ENCODE measurements at regions of chr1 and their contacts with region 1.

Region 1: GRCh38 chr1:59296358-59297256 is at the start of gene FGGY:
- DNase-seq: peak; percentile 97 to 98
- ATAC-seq: peak; percentile 80 to 83
- H3K4me3 ChIP-seq: peak within 1 kb of the TSS; percentile 53 to 82 (median 70)
- H3K27ac ChIP-seq: peak within 1 kb of the TSS; percentile 90 to 99 (median 96)
- H3K4me1 ChIP-seq: peaks cover 17 to 48% of the 10 kb centered on the region in 2 donors
- H3K27me3 ChIP-seq: no peaks in the 10 kb centered on the region
- CTCF ChIP-seq: no peak
- POLR2A ChIP-seq: peak; percentile 84 to 86
- total RNA-seq, gene FGGY: 24.9 to 35.9 (median 30.5) TPM

Region 2: GRCh38 chr1:58903514-58904298 is 392.9 kb before region 1 on chr1:
- in situ Hi-C with region 1: loop called in 3 of 4 experiments (anchors 10 to 25 kb)
- intact Hi-C with region 1: loop called (anchors 2 kb)
- DNase-seq: peak; percentile 86 to 93
- ATAC-seq: peak; percentile 69 to 81
- H3K4me3 ChIP-seq: peak overlapping the region; percentile 53 to 82 (median 60)
- H3K27ac ChIP-seq: peak overlapping the region; percentile 94 to 100 (median 94)
- H3K4me1 ChIP-seq: peaks cover 52 to 54% of the 10 kb centered on the region in 2 donors
- H3K27me3 ChIP-seq: no peaks in the 10 kb centered on the region
- CTCF ChIP-seq: no peak
- POLR2A ChIP-seq: peak; percentile 82 to 91

Region 3: GRCh38 chr1:59107516-59107915 is 189.1 kb before region 1 on chr1:
- in situ Hi-C with region 1: no loop called
- intact Hi-C with region 1: loop called (anchors 10 kb)
- DNase-seq: peak; percentile 87 to 92
- ATAC-seq: peak; percentile 98 to 99
- H3K4me3 ChIP-seq: no peak overlapping the region
- H3K27ac ChIP-seq: peak overlapping the region; percentile 76 to 87 (median 79)
- H3K4me1 ChIP-seq: peaks cover 11 to 17% of the 10 kb centered on the region in 2 donors
- H3K27me3 ChIP-seq: no peaks in the 10 kb centered on the region
- CTCF ChIP-seq: no peak
- POLR2A ChIP-seq: no peak

Region 4: DNA sequence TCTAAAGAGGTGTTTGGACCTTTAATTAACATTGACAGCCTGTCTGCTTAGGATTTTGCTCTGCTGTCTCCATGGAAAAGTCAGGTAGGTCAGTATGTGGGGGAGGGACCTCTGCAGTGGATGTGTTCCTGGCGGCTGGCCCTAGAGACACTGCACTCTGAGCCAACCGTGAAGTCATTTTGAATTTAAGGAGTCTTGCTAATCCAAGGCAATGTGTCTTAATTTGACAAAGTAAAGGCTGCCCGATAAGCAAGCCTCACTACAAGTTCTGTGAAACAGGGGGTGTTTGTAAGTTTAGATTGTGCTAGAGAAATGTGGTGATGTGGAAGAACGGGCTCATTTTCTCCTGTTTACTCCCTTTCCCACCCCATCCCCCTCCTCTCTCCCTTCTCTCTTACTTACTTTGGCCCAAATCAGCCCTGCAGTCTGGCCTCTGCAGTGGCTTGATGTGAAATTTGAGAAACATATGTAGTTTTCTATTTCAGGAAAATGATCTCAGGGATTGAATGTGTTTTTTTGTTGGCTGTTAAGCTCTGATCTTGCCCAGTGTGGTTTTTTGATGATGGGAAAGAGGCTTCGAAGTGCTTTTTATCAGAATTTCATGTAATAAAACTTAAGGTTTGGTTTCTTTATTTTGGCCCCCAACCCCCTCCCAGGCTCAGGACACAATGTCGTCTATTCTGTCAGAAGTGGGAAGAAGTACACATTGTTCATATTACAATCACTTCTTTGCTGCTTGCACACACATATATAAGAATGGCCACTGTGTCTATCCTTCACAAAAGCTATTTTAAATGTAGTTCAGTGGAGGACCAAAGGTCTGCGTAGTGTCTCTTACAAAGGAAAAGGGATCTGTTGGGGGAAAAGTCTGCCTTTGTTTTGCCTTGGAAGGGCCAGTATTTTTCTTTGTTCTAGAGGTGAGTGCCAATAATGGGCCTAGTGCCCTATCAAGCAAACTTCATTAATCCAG is 96.9 kb after region 1 on chr1:
- in situ Hi-C with region 1: no loop called
- intact Hi-C with region 1: loop called (anchors 2 kb)
- DNase-seq: peak; percentile 87 to 95
- ATAC-seq: peak; percentile 93 to 94
- H3K4me3 ChIP-seq: peak overlapping the region; percentile 3 to 24 (median 21)
- H3K27ac ChIP-seq: peak overlapping the region; percentile 89 to 95 (median 92)
- H3K4me1 ChIP-seq: peaks cover 64 to 67% of the 10 kb centered on the region in 2 donors
- H3K27me3 ChIP-seq: no peaks in the 10 kb centered on the region
- CTCF ChIP-seq: no peak
- POLR2A ChIP-seq: no peak

Region 5: GRCh38 chr1:59520827-59521418 is 224.3 kb after region 1 on chr1:
- in situ Hi-C with region 1: no loop called
- intact Hi-C with region 1: loop called (anchors 5 kb)
- DNase-seq: peak; percentile 4 to 53
- ATAC-seq: peak; percentile 35 to 66
- H3K4me3 ChIP-seq: no peak overlapping the region
- H3K27ac ChIP-seq: peak overlapping the region; percentile 86 to 92 (median 90)
- H3K4me1 ChIP-seq: peaks cover 44 to 56% of the 10 kb centered on the region in 2 donors
- H3K27me3 ChIP-seq: no peaks in the 10 kb centered on the region
- CTCF ChIP-seq: no peak
- POLR2A ChIP-seq: no peak

Region 6: DNA sequence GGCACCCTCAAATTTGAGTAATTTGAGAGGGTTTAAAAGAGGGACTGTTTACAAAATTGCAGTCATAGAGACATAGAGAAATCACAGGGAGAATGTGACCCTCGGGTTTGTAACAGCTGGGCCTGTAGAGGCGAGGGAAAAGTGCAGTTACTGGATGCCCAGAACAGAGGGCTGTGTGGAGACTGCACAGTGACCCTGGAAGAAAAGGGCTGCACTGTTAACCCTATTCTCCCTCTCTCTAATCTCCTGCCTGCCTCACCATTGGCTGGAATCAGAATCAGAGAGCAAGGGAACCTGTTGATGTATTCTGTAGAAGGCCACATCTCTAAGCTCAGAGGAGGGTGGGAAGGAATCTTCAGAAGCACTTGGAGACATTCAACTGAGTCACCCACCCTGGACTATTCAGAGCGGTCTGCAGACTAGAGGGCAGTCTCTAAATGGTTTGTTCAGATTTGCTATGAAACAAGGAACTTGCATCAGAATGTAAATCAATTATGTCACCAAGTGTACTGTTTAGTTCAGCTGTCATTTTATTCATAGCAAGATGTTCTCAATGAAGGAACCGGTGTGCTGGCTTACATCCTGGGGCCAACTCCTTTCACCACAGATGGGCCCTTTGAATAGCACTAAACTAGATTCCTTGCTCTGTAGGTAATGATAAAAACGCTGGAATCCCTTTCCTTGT is 385.9 kb after region 1 on chr1:
- in situ Hi-C with region 1: loop called in 1 of 4 experiments (anchors 10 kb)
- intact Hi-C with region 1: no loop called
- DNase-seq: peak; percentile 62 to 76
- ATAC-seq: peak; percentile 65 to 73
- H3K4me3 ChIP-seq: no peak overlapping the region
- H3K27ac ChIP-seq: peak overlapping the region; percentile 85 to 89 (median 87)
- H3K4me1 ChIP-seq: peaks cover 57 to 77% of the 10 kb centered on the region in 2 donors
- H3K27me3 ChIP-seq: no peaks in the 10 kb centered on the region
- CTCF ChIP-seq: no peak
- POLR2A ChIP-seq: peak in 1 of 2 donors; percentile 60

Measured in gastrocnemius medialis (tissue), 4 donors.